Activated B cell treated with CpG ODN at 0.5 μM for 24 hours (primary cell): ENCODE measurements at regions of chr10 and their contacts with region 1.

Region 1: GRCh38 chr10:123154092-123154921 is at the start of gene BUB3:
- DNase-seq: peak; percentile 80
- ATAC-seq: peak; percentile 91
- H3K4me3 Mint-ChIP-seq: peak within 1 kb of the TSS; percentile 100
- H3K27ac Mint-ChIP-seq: peak within 1 kb of the TSS; percentile 99
- H3K4me1 Mint-ChIP-seq: peaks cover 73% of the 10 kb centered on the region
- H3K27me3 Mint-ChIP-seq: peaks cover 13% of the 10 kb centered on the region
- CTCF ChIP-seq: no peak
- total RNA-seq, gene BUB3: 137 and 141 TPM in 2 replicates

Region 2: GRCh38 chr10:121927841-121928527 is 1226.3 kb before region 1 on chr10 and contains the start of gene ATE1:
- CTCF ChIA-PET with region 1: no interaction called
- POLR2A ChIA-PET with region 1: no interaction called
- intact Hi-C with region 1: loop called (anchors 5 kb)
- DNase-seq: peak; percentile 79
- ATAC-seq: peak; percentile 91
- H3K4me3 Mint-ChIP-seq: peak within 1 kb of the TSS; percentile 94
- H3K27ac Mint-ChIP-seq: peak within 1 kb of the TSS; percentile 91
- H3K4me1 Mint-ChIP-seq: peaks cover 19% of the 10 kb centered on the region
- H3K27me3 Mint-ChIP-seq: no peaks in the 10 kb centered on the region
- CTCF ChIP-seq: no peak
- total RNA-seq, gene ATE1: 26.0 and 31.0 TPM in 2 replicates

Region 3: GRCh38 chr10:122953827-122954730 is 200.2 kb before region 1 on chr10 and contains the start of gene C10orf88:
- CTCF ChIA-PET with region 1: no interaction called
- POLR2A ChIA-PET with region 1: interaction called, 7 read pairs
- intact Hi-C with region 1: loop called (anchors 1 kb)
- DNase-seq: peak; percentile 94
- ATAC-seq: peak; percentile 94
- H3K4me3 Mint-ChIP-seq: peak within 1 kb of the TSS; percentile 89
- H3K27ac Mint-ChIP-seq: peak within 1 kb of the TSS; percentile 84
- H3K4me1 Mint-ChIP-seq: peaks cover 28% of the 10 kb centered on the region
- H3K27me3 Mint-ChIP-seq: peaks cover 2% of the 10 kb centered on the region
- CTCF ChIP-seq: no peak
- total RNA-seq, gene C10orf88: 10.9 and 12.5 TPM in 2 replicates

Region 4: GRCh38 chr10:123132576-123133477 is 21.5 kb before region 1 on chr10:
- CTCF ChIA-PET with region 1: interaction called, 7 read pairs
- POLR2A ChIA-PET with region 1: interaction called, 8 read pairs
- intact Hi-C with region 1: loop called (anchors 1 kb)
- DNase-seq: peak; percentile 65
- ATAC-seq: peak; percentile 76
- H3K4me3 Mint-ChIP-seq: peak overlapping the region; percentile 66
- H3K27ac Mint-ChIP-seq: peak overlapping the region; percentile 71
- H3K4me1 Mint-ChIP-seq: peaks cover 34% of the 10 kb centered on the region
- H3K27me3 Mint-ChIP-seq: peaks cover 69% of the 10 kb centered on the region
- CTCF ChIP-seq: peak; percentile 26

Region 5: GRCh38 chr10:123559066-123559822 is 404.9 kb after region 1 on chr10:
- CTCF ChIA-PET with region 1: no interaction called
- POLR2A ChIA-PET with region 1: no interaction called
- intact Hi-C with region 1: loop called (anchors 5 kb)
- DNase-seq: peak; percentile 66
- ATAC-seq: peak; percentile 58
- H3K4me3 Mint-ChIP-seq: no peak overlapping the region
- H3K27ac Mint-ChIP-seq: no peak overlapping the region
- H3K4me1 Mint-ChIP-seq: no peaks in the 10 kb centered on the region
- H3K27me3 Mint-ChIP-seq: peaks cover 9% of the 10 kb centered on the region
- CTCF ChIP-seq: peak; percentile 98

Region 6: GRCh38 chr10:124802313-124802675 is 1648.0 kb after region 1 on chr10:
- CTCF ChIA-PET with region 1: no interaction called
- POLR2A ChIA-PET with region 1: no interaction called
- intact Hi-C with region 1: loop called (anchors 5 kb)
- DNase-seq: no peak
- ATAC-seq: peak; percentile 61
- H3K4me3 Mint-ChIP-seq: peak overlapping the region; percentile 92
- H3K27ac Mint-ChIP-seq: peak overlapping the region; percentile 93
- H3K4me1 Mint-ChIP-seq: peaks cover 18% of the 10 kb centered on the region
- H3K27me3 Mint-ChIP-seq: peaks cover 2% of the 10 kb centered on the region
- CTCF ChIP-seq: no peak